ENCODE measurements at regions of chrX and their contacts with region 1.

Region 1: GRCh38 chrX:139559383-139560042 is 29.0 kb downstream of the F9 start:
- H3K4me3 ChIP-seq: no peak overlapping the region
- H3K27ac ChIP-seq: no peak overlapping the region
- H3K4me1 ChIP-seq: no peaks in the 10 kb centered on the region
- CTCF ChIP-seq: no peak

Region 2: DNA sequence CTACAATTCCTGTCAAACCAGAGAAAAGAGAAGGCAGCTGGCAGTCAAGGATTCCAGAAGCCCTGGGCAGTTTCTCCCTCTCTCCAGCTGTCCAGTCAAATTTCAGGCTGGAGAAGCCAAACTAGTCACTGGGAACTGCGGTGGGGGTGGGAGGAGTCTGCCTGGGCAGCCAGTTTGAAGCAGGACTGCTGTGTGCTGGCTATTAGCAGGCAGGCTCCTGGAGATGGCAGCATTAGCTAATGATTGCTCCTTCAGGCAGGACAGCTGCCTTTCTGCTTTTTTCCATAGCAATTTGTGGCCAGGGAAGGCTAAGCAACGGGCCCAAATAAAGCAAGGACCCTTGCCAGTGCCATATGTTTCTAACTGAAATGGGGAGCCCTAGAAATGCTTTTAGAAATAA is 803.3 kb before region 1 on chrX:
- CTCF ChIA-PET with region 1: interaction called, 13 read pairs
- POLR2A ChIA-PET with region 1: no interaction called
- H3K4me3 ChIP-seq: no peak overlapping the region
- H3K27ac ChIP-seq: no peak overlapping the region
- H3K4me1 ChIP-seq: no peaks in the 10 kb centered on the region
- CTCF ChIP-seq: 0 out of 2 replicates have a peak, but pooled peaks have one; percentile 24

Region 3: GRCh38 chrX:138775517-138775916 is 784.0 kb before region 1 on chrX:
- CTCF ChIA-PET with region 1: interaction called, 11 read pairs
- POLR2A ChIA-PET with region 1: no interaction called
- H3K4me3 ChIP-seq: no peak overlapping the region
- H3K27ac ChIP-seq: no peak overlapping the region
- H3K4me1 ChIP-seq: no peaks in the 10 kb centered on the region
- CTCF ChIP-seq: no peak

Region 4: GRCh38 chrX:139126493-139126892 is 433.0 kb before region 1 on chrX:
- CTCF ChIA-PET with region 1: interaction called, 14 read pairs
- POLR2A ChIA-PET with region 1: no interaction called
- H3K4me3 ChIP-seq: no peak overlapping the region
- H3K27ac ChIP-seq: no peak overlapping the region
- H3K4me1 ChIP-seq: no peaks in the 10 kb centered on the region
- CTCF ChIP-seq: no peak